Breast epithelium (tissue), 4 donors: ENCODE measurements at regions of chr3 and their contacts with region 1.

Region 1: DNA sequence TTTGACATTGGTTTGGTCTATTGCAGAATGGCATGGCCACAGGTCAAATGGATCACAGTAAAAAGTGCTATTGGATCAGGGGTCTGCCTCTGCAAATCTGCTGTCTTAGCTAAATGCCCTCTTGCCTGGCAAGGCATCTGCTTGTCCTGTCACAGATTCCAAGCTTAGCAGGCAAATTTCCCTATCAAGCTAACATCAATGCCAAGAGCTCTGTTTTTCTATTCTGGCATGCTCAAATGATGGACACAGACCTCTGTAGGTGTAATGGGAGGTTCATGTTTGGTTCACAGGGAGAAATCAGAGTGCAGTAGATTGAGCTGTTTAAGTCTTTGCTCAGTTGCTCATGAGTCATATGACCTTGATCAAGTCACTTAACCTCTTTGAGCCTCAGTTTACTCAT is 54.8 kb upstream of the CPB1 start:
- DNase-seq: no peak
- H3K4me3 ChIP-seq: no peak overlapping the region
- H3K27ac ChIP-seq: no peak overlapping the region
- H3K4me1 ChIP-seq: no peaks in the 10 kb centered on the region
- H3K27me3 ChIP-seq: no peaks in the 10 kb centered on the region
- CTCF ChIP-seq: no peak
- POLR2A ChIP-seq: no peak

Region 2: GRCh38 chr3:147906275-147906674 is 866.6 kb before region 1 on chr3:
- intact Hi-C with region 1: loop called (anchors 5 kb)
- DNase-seq: no peak
- H3K4me3 ChIP-seq: no peak overlapping the region
- H3K27ac ChIP-seq: no peak overlapping the region
- H3K4me1 ChIP-seq: no peaks in the 10 kb centered on the region
- H3K27me3 ChIP-seq: no peaks in the 10 kb centered on the region
- CTCF ChIP-seq: no peak
- POLR2A ChIP-seq: no peak

Region 3: GRCh38 chr3:148847351-148847750 is 74.5 kb after region 1 on chr3:
- intact Hi-C with region 1: no loop called
- DNase-seq: no peak
- H3K4me3 ChIP-seq: no peak overlapping the region
- H3K27ac ChIP-seq: no peak overlapping the region
- H3K4me1 ChIP-seq: no peaks in the 10 kb centered on the region
- H3K27me3 ChIP-seq: no peaks in the 10 kb centered on the region
- CTCF ChIP-seq: no peak
- POLR2A ChIP-seq: no peak